ENCODE measurements at regions of chr7 and their contacts with region 1.

Region 1: DNA sequence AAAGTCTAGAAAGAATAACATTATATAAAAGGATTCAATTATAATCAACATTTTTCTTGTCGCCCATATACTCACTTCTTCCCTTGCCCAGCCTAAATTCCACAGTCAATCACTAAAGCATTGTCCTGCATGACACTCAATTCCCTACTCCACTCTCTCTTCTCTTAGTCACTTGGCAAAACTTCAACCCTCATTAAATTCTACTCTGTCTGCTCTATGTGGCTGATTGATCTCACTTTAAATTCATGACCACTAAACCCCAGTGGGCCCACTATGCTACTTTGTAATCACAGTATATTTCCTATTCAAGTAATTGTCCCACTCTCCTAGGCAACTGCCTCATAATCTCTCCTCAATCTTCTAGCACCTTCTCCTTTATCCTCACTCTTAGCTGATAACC is 54.1 kb downstream of the MTERF1 start:
- DNase-seq: peak; percentile 6
- H3K4me3 Mint-ChIP-seq: no peak overlapping the region
- H3K27ac Mint-ChIP-seq: no peak overlapping the region
- H3K4me1 Mint-ChIP-seq: peaks cover 7% of the 10 kb centered on the region
- H3K27me3 Mint-ChIP-seq: no peaks in the 10 kb centered on the region
- CTCF ChIP-seq: no peak

Region 2: DNA sequence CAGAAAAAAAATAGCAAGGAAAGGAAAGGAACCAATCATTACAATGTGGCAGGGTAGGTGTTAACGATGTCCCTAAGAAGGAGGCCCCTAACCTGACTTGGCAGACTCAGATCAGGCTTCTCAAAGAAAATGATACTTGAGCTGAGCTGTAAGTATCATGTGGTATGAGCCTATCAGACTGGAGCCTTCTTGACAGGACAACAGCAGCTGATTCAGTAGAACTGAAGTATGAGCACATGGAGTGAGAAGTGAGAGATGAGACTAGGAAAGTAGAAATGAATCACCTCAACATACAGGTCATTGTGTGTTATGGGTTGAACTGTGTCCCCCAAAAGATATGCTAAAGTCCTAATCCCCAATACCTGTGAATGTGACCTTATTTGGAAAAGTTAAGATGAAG is 12.2 kb before region 1 on chr7:
- CTCF ChIA-PET with region 1: interaction called, 13 read pairs
- POLR2A ChIA-PET with region 1: no interaction called
- intact Hi-C with region 1: no loop called
- DNase-seq: no peak
- H3K4me3 Mint-ChIP-seq: no peak overlapping the region
- H3K27ac Mint-ChIP-seq: no peak overlapping the region
- H3K4me1 Mint-ChIP-seq: no peaks in the 10 kb centered on the region
- H3K27me3 Mint-ChIP-seq: no peaks in the 10 kb centered on the region
- CTCF ChIP-seq: no peak

Region 3: GRCh38 chr7:91852263-91852741 is 25.9 kb after region 1 on chr7:
- CTCF ChIA-PET with region 1: interaction called, 32 read pairs
- POLR2A ChIA-PET with region 1: interaction called, 4 read pairs
- intact Hi-C with region 1: loop called (anchors 1 kb)
- DNase-seq: peak; percentile 63
- H3K4me3 Mint-ChIP-seq: no peak overlapping the region
- H3K27ac Mint-ChIP-seq: no peak overlapping the region
- H3K4me1 Mint-ChIP-seq: peaks cover 26% of the 10 kb centered on the region
- H3K27me3 Mint-ChIP-seq: no peaks in the 10 kb centered on the region
- CTCF ChIP-seq: peak; percentile 25

Region 4: DNA sequence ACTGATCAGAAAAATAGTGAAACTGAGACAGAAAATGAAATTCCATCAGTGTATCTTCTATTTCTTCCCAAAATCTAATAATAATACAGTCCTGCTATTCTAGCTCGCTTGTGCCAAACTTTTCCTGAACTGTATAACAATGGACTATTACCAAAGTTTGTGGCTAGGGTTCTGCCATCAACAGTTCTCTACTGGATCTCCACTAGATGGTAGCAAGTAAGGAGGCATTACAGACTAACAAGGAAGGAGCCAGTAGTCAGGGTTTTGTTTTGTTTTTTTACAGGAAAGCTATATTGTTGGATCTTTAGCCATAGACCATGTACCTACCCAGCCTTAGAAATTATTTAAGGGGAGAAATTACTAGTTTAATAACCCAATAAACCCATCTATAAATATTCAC is 43.3 kb after region 1 on chr7:
- CTCF ChIA-PET with region 1: interaction called, 276 read pairs
- POLR2A ChIA-PET with region 1: no interaction called
- intact Hi-C with region 1: no loop called
- DNase-seq: no peak
- H3K4me3 Mint-ChIP-seq: no peak overlapping the region
- H3K27ac Mint-ChIP-seq: no peak overlapping the region
- H3K4me1 Mint-ChIP-seq: peaks cover 5% of the 10 kb centered on the region
- H3K27me3 Mint-ChIP-seq: no peaks in the 10 kb centered on the region
- CTCF ChIP-seq: no peak